Panc1 (cell line): ENCODE measurements at regions of chr13 and their contacts with region 1.

Region 1: DNA sequence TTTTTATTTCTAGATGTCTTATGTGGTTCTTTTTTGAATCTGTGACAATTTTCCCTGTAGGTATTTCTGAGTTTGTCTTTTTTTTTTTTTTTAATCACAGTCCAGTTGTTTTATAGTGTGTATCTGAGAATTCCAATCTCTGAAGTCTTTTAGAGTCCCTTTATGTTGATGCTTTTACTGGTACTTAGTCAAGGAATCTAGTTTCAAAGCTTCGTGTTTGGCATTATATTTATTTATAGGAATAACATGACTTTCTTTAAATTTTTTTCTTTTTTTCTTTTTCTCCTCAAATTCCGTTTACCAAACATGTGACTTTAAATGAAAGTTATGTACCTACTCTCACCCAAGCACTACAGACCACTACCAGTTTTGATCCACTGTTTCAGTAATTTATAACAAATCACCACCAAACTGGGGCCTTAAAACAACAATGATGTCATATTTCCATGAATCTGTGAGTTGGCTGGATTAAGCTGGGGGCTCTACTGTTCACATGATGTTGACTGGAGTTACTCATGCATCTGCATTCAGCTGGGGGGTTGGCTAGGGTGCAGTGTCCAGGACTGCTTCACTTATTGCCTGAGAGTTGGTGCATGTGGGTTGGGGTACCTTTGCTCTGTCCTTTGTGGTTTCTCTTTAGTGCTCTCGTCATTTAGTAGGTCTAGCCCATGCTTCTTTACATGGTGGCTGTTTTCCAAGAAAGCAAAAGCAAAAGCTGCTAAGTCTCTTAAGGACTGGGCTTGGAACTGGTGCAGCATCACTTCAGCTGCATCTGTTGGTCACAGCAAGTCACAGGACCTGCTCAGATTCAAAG is 22.3 kb downstream of the KCTD4 start:
- DNase-seq: no peak
- ATAC-seq: peak; percentile 75
- H3K4me3 ChIP-seq: no peak overlapping the region
- H3K27ac ChIP-seq: peak overlapping the region; percentile 57
- H3K4me1 ChIP-seq: peaks cover 6% of the 10 kb centered on the region
- H3K27me3 ChIP-seq: no peaks in the 10 kb centered on the region
- CTCF ChIP-seq: no peak

Region 2: DNA sequence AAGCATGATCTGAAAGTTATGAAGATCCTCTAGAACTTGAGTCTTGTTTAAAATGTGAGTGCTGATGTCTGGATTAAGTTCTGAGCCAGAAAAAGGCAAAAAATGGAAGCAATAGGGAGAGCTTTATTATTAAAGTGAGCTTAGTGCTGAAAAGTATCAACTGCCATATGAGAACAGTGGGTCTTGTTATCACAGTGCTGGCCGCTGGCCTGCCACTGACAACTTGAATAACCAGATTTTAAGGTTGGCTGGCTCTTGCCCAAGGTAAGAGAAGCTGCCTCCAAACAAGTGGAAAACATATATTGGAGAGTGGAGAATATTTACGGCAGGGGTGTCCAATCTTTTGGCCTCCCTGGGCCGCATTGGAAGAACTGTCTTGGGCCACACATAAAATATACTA is 223.2 kb before region 1 on chr13:
- CTCF ChIA-PET with region 1: interaction called, 12 read pairs
- POLR2A ChIA-PET with region 1: no interaction called
- in situ Hi-C with region 1: no loop called
- intact Hi-C with region 1: no loop called
- DNase-seq: no peak
- ATAC-seq: no peak
- H3K4me3 ChIP-seq: no peak overlapping the region
- H3K27ac ChIP-seq: no peak overlapping the region
- H3K4me1 ChIP-seq: no peaks in the 10 kb centered on the region
- H3K27me3 ChIP-seq: no peaks in the 10 kb centered on the region
- CTCF ChIP-seq: no peak

Region 3: GRCh38 chr13:45258339-45258685 is 79.8 kb after region 1 on chr13:
- CTCF ChIA-PET with region 1: no interaction called
- POLR2A ChIA-PET with region 1: no interaction called
- in situ Hi-C with region 1: no loop called
- intact Hi-C with region 1: no loop called
- DNase-seq: no peak
- ATAC-seq: no peak
- H3K4me3 ChIP-seq: no peak overlapping the region
- H3K27ac ChIP-seq: no peak overlapping the region
- H3K4me1 ChIP-seq: no peaks in the 10 kb centered on the region
- H3K27me3 ChIP-seq: no peaks in the 10 kb centered on the region
- CTCF ChIP-seq: no peak

Region 4: DNA sequence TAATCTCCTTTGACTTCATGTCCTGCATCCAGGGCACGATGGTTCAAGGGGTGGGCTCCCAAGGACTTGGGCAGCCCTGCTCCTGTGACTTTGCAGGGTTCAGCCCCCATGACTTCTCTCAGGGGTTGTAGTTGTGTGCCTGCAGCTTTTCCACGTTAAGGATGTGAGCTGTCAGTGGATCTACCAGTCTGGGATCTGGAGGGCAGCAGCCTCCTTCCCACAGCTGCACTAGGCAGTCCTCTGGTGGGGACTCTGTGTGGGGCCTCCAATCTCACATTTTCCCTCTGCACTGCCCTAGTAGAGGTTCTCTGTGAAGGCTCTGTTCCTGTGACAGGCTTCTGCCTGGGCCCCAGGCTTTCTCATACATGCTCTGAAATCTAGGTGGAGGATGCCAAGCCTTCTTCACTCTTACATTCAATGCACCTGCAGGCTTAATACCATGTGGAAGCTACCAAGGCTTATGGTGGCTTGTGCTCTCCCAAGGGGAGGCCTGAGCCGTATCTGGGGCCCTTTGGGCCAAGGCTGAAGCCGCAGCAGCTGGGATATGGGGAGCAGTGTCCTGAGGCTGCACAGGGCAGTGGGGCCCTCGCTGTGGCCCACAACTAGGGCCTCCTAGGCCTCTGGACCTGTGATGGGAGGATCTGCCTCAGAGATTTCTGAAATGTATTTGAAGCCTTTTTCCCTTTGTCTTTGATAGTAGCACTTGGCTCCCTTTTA is 476.2 kb after region 1 on chr13:
- CTCF ChIA-PET with region 1: no interaction called
- POLR2A ChIA-PET with region 1: no interaction called
- in situ Hi-C with region 1: no loop called
- intact Hi-C with region 1: no loop called
- DNase-seq: no peak
- ATAC-seq: no peak
- H3K4me3 ChIP-seq: no peak overlapping the region
- H3K27ac ChIP-seq: no peak overlapping the region
- H3K4me1 ChIP-seq: no peaks in the 10 kb centered on the region
- H3K27me3 ChIP-seq: no peaks in the 10 kb centered on the region; the same call in 1 of the 2 replicates
- CTCF ChIP-seq: no peak